Heart left ventricle (tissue), 16 donors: ENCODE measurements at regions of chr6 and their contacts with region 1.

Region 1: DNA sequence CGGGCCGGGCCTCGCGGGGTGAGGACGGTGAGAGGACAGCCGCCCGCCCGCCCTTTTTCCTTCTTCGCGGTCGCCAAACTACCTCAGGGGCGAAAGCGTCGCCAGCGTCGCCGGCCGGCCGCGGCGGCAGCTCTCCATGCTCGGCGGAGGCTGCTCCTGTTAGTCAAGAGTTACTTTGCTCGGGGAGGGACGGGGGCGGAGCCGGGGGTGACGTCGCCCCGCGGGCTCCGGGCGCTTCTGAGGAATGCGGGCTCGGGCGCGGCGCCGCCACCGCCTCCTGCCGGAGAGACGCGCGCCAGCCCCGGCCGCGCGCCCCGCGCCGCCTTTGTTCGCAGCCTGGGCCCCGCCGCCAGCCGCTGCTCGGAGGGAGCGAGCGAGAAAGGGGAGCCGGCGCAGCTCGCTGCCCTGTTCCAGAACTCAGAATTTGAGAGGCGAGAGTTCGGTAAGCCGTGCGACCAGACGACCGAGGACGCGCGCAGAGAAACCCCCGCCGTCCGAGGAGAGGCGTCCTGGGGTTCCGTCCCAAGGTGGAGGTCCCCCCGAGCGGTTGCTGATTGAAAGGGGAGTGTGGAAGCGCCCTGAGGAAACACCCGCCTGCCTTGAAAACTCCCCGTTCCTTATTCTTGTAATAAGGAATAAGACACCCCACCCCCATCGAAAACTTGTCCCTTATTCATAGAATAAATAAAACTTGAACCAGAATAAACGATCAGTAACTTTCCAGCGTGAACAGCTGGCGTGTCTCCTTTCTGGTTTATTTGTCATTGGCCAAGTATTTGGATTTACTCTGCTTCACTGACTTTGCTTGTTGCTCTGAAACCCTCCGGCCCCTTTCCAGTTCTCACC is at the start of gene PTPRK:
- DNase-seq: peak; percentile 94 to 96 (median 95)
- ATAC-seq: peak; percentile 87 to 96 (median 94)
- H3K4me3 ChIP-seq: peak within 1 kb of the TSS; percentile 60 to 91 (median 87)
- H3K27ac ChIP-seq: peak within 1 kb of the TSS; percentile 87 to 98 (median 94)
- H3K4me1 ChIP-seq: peaks cover 0 to 33% (median 22%) of the 10 kb centered on the region in 12 donors
- H3K27me3 ChIP-seq: peaks cover 0 to 48% (median 0%) of the 10 kb centered on the region in 9 donors
- CTCF ChIP-seq: peak in 11 of 12 donors; percentile 46 to 92 (median 81)
- POLR2A ChIP-seq: peak; percentile 66 to 98
- total RNA-seq, gene PTPRK: 27.8 to 50.8 (median 40.0) TPM

Region 2: DNA sequence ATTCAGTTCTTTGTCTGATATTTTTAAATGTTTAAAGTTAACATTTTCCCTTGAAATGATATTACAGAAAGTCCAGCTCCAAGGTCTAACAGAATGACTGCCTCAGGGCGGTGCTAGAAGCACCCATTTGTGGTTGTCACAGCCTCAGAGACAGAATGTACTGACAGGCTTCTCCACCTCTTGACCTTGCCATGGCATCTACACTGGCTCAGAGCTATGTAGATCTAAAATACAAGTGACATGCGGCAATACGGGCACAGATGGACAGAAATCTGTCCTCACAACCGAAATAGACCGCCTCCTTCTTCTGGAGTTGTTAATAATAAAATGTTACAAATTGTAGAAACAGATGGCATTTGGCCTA is 452.6 kb before region 1 on chr6:
- intact Hi-C with region 1: loop called in 6 of 10 experiments (anchors 5 to 10 kb)
- DNase-seq: peak in 4 of 5 donors; percentile 30 to 73 (median 56)
- ATAC-seq: peak; percentile 97 to 98 (median 98)
- H3K4me3 ChIP-seq: no peak overlapping the region
- H3K27ac ChIP-seq: peak overlapping the region in 8 of 12 donors; percentile 1 to 50 (median 39)
- H3K4me1 ChIP-seq: peaks cover 0 to 33% (median 1%) of the 10 kb centered on the region in 12 donors
- H3K27me3 ChIP-seq: no peaks in the 10 kb centered on the region
- CTCF ChIP-seq: peak in 7 of 12 donors; percentile 12 to 47 (median 30)
- POLR2A ChIP-seq: no peak

Region 3: DNA sequence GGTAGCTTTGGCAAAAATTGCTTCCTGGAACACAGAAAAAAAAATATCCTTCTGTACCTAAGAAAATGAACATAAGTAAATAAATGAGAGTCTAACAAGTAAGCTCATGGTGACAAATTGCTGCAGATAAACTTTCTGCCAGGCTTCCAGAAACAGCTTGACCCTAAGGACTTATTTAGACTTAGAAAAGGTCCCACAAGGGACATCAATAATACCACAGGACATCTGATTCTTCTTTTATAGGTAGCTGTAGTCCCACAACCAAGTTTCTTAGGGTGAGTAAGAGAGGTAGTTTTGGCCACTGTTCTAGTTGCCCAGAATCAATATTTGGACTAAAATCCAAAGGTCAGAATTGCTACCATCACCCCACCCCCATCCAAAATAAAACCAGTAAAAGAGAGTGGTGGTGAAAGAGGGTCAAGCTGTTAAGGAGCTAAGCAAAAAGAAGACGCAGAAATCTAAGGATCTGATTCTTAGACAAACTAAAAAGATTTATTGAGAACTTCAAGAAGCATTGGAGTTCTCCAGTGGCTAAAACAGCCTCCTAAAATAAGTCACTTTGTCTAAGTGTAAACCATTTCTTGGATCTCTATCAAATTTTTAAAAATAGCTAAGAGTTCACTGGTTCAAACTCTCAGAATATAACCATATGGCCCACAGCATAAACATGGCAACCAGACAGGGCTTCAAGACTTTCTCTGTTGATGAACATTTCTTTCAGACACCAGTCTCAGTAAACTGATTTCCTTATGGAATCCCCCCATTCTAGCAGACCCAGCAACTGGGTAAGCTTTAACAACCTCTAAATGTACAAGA is 180.8 kb before region 1 on chr6:
- intact Hi-C with region 1: loop called in 3 of 10 experiments (anchors 5 to 10 kb)
- DNase-seq: no peak
- ATAC-seq: peak in 2 of 4 donors; percentile 53 to 59
- H3K4me3 ChIP-seq: no peak overlapping the region
- H3K27ac ChIP-seq: peak overlapping the region in 9 of 12 donors; percentile 3 to 62 (median 32)
- H3K4me1 ChIP-seq: peaks cover 0 to 33% (median 16%) of the 10 kb centered on the region in 12 donors
- H3K27me3 ChIP-seq: no peaks in the 10 kb centered on the region
- CTCF ChIP-seq: no peak
- POLR2A ChIP-seq: no peak

Region 4: DNA sequence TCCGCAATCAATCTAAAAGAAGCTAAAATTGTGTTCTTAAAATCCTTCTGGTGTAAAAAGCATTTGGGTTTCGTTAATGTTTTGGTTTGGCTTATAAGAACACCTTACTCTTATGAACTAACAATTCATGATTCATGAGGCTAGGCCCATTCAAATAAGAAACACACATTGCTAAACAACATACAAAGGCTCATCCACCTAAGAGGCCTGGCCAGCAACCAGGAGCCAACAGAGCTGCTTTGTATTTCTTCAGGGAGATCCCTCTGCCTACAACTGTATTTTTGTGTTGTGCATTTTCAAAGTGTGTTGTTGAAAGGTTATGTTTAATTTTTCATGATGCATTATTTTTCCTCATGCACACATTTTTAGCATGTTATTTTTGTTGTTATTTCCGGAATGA is 98.9 kb before region 1 on chr6:
- intact Hi-C with region 1: loop called in 1 of 10 experiments (anchors 10 kb)
- DNase-seq: no peak
- ATAC-seq: peak in 1 of 4 donors; percentile 35
- H3K4me3 ChIP-seq: no peak overlapping the region
- H3K27ac ChIP-seq: peak overlapping the region in 1 of 12 donors; percentile 20
- H3K4me1 ChIP-seq: peaks cover 0 to 60% (median 12%) of the 10 kb centered on the region in 12 donors
- H3K27me3 ChIP-seq: no peaks in the 10 kb centered on the region
- CTCF ChIP-seq: no peak
- POLR2A ChIP-seq: no peak

Region 5: DNA sequence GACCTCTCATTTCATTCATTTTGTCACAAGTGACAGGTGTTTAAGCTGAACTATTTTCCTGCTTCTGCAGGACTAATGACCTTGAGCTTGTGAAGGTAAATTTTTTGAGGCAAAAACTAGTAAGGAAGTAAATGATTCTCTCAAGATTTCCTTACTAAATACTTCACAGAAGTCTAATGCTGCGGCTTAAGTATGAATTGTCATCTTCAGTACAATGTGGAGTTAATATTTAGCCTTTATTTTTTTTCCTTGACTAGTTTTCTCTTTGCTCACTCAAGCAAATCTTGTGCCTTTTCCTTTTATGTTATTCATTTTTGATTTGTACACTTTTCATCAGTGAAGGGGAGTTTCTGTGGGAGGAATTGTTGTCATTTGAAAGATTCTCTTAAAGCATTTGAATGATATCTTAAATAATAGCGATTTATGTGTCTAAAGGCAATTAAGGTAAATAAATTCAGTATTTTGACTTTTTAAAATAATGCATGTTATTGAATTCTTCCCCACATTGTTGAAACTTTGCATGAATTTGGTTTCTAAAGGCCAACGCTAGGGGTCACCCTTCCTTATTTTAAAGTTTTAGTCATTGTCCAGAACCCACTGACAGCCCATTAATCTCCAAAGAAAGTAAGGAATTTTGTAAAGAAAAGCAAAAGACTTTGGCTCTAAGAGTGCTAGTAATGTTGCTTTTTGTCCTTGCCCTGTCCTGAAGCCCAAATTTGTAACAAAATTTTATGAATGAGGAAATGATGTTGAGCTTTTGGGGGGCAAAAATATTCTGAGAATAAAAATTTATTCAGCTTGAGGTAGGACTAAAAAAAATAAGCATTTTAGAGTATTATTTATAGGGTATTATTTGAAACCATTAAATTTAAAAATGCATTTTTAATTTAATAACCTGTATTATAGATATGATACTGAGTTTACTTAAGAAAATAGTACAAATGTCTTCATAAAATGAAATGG is 204.9 kb after region 1 on chr6:
- intact Hi-C with region 1: loop called in 6 of 10 experiments (anchors 2 to 10 kb)
- DNase-seq: peak in 1 of 5 donors; percentile 12
- ATAC-seq: no peak
- H3K4me3 ChIP-seq: no peak overlapping the region
- H3K27ac ChIP-seq: no peak overlapping the region
- H3K4me1 ChIP-seq: peaks cover 0 to 6% (median 0%) of the 10 kb centered on the region in 12 donors
- H3K27me3 ChIP-seq: no peaks in the 10 kb centered on the region
- CTCF ChIP-seq: peak; percentile 43 to 77 (median 62)
- POLR2A ChIP-seq: no peak

Region 6: DNA sequence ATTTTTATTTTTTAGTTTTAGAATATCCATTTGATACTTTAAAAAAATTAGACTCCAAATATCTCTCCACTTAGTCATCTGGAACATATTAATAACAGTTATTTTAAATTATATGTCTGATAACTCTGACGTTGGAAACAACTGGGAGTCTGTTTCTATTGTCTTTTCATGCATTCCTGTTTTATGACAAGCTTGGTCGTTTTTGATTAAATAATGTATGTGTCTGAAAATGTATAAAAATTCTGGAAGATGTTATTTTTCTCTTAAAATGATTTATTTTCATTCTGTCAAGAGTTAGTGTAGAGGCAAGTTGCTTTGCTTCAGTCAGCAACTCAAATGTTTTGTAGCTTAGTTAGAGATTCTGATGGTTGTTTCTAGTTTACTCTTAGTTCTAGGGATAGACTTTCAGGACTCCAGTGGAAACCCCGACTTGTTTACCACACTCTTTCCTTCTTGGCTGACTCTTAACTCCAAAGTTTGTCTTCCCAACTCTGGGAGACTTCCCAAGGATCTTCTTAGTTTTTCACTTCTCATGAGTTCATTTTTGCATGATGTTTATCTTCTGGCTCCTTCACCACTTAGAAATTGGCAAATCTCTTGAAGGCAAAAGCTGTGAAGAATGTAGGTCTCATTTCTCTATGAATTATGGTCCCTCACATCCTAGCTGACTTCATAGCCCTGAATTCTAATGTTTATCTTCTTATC is 553.2 kb after region 1 on chr6:
- intact Hi-C with region 1: no loop called
- DNase-seq: no peak
- ATAC-seq: peak in 2 of 4 donors; percentile 7 to 31
- H3K4me3 ChIP-seq: no peak overlapping the region
- H3K27ac ChIP-seq: peak overlapping the region in 9 of 12 donors; percentile 3 to 71 (median 32)
- H3K4me1 ChIP-seq: peaks cover 0 to 28% (median 10%) of the 10 kb centered on the region in 12 donors
- H3K27me3 ChIP-seq: no peaks in the 10 kb centered on the region
- CTCF ChIP-seq: no peak
- POLR2A ChIP-seq: no peak